Activated CD8-positive, alpha-beta T cell treated with anti-CD3 and anti-CD28 coated beads, Interleukin-2, amount 10 ng/mL, durations not matched to agents 7 days and 5 days (primary cell): ENCODE measurements at regions of chr11 and their contacts with region 1.

Region 1: GRCh38 chr11:111982019-111982464 is 43.2 kb upstream of the DLAT start:
- DNase-seq: peak; percentile 70
- ATAC-seq: peak; percentile 71
- H3K4me3 Mint-ChIP-seq: no peak overlapping the region
- H3K27ac Mint-ChIP-seq: no peak overlapping the region
- H3K4me1 Mint-ChIP-seq: peaks cover 6% of the 10 kb centered on the region
- H3K27me3 Mint-ChIP-seq: peaks cover 14% of the 10 kb centered on the region

Region 2: GRCh38 chr11:111870886-111871692 is 111.0 kb before region 1 on chr11 and contains the start of gene ALG9:
- CTCF ChIA-PET with region 1: interaction called, 13 read pairs
- POLR2A ChIA-PET with region 1: no interaction called
- DNase-seq: peak; percentile 91
- ATAC-seq: peak; percentile 93
- H3K4me3 Mint-ChIP-seq: peak within 1 kb of the TSS; percentile 89
- H3K27ac Mint-ChIP-seq: peak within 1 kb of the TSS; percentile 90
- H3K4me1 Mint-ChIP-seq: peaks cover 23% of the 10 kb centered on the region
- H3K27me3 Mint-ChIP-seq: no peaks in the 10 kb centered on the region
- total RNA-seq, gene ALG9: 29.2 to 31.1 TPM

Region 3: GRCh38 chr11:111879637-111879960 is 102.4 kb before region 1 on chr11:
- CTCF ChIA-PET with region 1: interaction called, 10 read pairs
- POLR2A ChIA-PET with region 1: no interaction called
- DNase-seq: no peak
- ATAC-seq: peak; percentile 6
- H3K4me3 Mint-ChIP-seq: peak overlapping the region; percentile 89
- H3K27ac Mint-ChIP-seq: peak overlapping the region; percentile 99
- H3K4me1 Mint-ChIP-seq: peaks cover 18% of the 10 kb centered on the region
- H3K27me3 Mint-ChIP-seq: no peaks in the 10 kb centered on the region

Region 4: GRCh38 chr11:111926505-111927391 is 55.3 kb before region 1 on chr11:
- CTCF ChIA-PET with region 1: interaction called, 261 read pairs
- POLR2A ChIA-PET with region 1: interaction called, 4 read pairs
- DNase-seq: peak; percentile 96
- ATAC-seq: peak; percentile 93
- H3K4me3 Mint-ChIP-seq: peak overlapping the region; percentile 82
- H3K27ac Mint-ChIP-seq: peak overlapping the region; percentile 91
- H3K4me1 Mint-ChIP-seq: peaks cover 16% of the 10 kb centered on the region
- H3K27me3 Mint-ChIP-seq: peaks cover 7% of the 10 kb centered on the region

Region 5: DNA sequence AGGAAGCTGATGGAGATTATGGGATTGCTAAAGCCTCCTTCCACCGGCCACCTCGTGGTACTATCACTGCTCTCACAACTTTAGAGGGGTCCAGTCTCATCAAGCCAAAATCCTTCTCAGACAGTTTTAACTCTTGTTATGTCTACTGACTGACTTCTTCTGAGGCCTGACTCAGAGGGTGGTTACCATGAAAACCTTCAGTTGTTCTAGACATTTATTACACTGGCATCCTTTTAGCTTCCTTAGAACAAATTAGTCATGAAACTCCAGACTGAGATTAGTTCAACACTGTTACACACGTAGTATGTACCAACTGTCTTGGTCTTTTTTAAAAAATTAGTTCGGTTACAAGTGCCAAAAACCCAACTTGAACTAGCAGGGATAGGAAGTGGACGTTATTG is 37.4 kb before region 1 on chr11:
- CTCF ChIA-PET with region 1: interaction called, 10 read pairs
- POLR2A ChIA-PET with region 1: no interaction called
- DNase-seq: no peak
- ATAC-seq: peak; percentile 36
- H3K4me3 Mint-ChIP-seq: no peak overlapping the region
- H3K27ac Mint-ChIP-seq: no peak overlapping the region
- H3K4me1 Mint-ChIP-seq: peaks cover 16% of the 10 kb centered on the region
- H3K27me3 Mint-ChIP-seq: no peaks in the 10 kb centered on the region

Region 6: GRCh38 chr11:112082729-112083128 is 100.7 kb after region 1 on chr11:
- CTCF ChIA-PET with region 1: no interaction called
- POLR2A ChIA-PET with region 1: no interaction called
- DNase-seq: no peak
- ATAC-seq: no peak
- H3K4me3 Mint-ChIP-seq: no peak overlapping the region
- H3K27ac Mint-ChIP-seq: peak overlapping the region; percentile 76
- H3K4me1 Mint-ChIP-seq: peaks cover 42% of the 10 kb centered on the region
- H3K27me3 Mint-ChIP-seq: no peaks in the 10 kb centered on the region